ENCODE measurements at regions of chr4 and their contacts with region 1.

Region 1: DNA sequence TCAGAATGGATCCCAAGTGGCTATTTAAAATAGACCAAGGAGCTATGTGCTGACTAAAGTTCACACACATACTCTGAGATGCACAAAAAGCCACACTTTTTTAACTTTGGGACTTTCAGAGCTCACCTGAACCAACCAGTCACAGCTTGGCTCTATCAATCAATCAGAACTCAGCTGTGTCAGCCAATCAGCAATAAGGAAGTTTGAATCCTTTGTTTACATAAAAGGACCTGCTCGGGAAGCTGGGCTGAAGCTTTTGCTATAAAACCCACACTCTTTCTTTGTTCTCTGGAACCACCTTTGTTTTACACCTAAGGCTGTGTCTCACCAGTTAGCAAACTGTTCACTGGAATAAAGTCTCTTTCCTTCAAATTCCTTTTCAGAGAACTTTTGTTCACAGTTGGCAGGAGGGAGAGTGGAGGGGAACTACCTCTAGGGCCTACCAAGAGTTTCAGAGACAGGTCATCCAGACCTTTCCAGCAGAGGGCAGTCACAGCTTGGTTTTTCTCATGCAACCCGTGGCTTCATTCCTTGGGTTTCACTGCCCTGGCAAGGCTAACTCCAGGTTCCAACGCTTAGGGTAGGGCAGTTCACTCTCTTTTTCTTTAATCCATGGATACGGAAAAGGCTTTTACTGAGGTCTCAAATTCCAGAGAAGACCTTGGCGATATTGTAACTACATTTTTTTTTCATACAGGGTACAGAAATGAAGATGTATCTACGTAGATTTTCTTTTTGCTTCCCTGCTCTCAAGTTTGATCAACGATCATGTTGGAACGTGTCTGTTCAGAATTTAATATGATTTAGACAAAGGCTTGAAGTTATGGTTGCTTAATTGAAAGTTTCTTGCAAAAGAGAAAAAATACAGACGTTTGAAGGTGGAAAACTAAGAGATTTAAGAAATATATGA is 80.7 kb downstream of the GPRIN3 start:
- DNase-seq: peak; percentile 4
- ATAC-seq: peak; percentile 92
- H3K4me3 ChIP-seq: no peak overlapping the region
- H3K27ac ChIP-seq: no peak overlapping the region
- H3K4me1 ChIP-seq: no peaks in the 10 kb centered on the region
- H3K27me3 ChIP-seq: no peaks in the 10 kb centered on the region; a peak in 1 of 4 replicates
- CTCF ChIP-seq: peak; percentile 69 to 77 (median 71)
- EP300 ChIP-seq: no peak
- POLR2A ChIP-seq: no peak
- RAD21 ChIP-seq: peak; percentile 68

Region 2: DNA sequence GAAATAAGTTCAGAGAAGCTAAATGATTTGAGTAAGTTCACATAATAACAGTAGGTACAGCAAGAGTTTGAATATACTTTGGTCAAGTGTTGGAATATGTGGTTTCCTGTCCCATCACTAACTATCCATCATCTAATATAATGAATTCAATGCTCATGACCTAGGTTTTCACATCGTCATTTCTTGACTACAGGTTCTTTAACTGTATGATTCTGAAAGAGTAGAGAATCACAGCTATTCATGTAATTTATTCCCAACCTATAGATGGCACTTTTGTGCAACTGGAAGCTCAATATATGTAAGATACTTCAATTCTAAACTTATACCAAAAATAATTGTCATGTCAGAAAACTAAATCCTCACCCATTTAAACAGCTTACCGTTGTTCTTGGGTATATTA is 62.5 kb before region 1 on chr4:
- CTCF ChIA-PET with region 1: interaction called, 28 read pairs
- POLR2A ChIA-PET with region 1: no interaction called
- RAD21 ChIA-PET with region 1: interaction called, 10 read pairs
- SMC1A ChIA-PET with region 1: interaction called, 20 read pairs
- in situ Hi-C with region 1: no loop called
- intact Hi-C with region 1: no loop called
- DNase-seq: no peak
- ATAC-seq: peak; percentile 63
- H3K4me3 ChIP-seq: no peak overlapping the region
- H3K27ac ChIP-seq: no peak overlapping the region
- H3K4me1 ChIP-seq: no peaks in the 10 kb centered on the region
- H3K27me3 ChIP-seq: no peaks in the 10 kb centered on the region; a peak in 1 of 4 replicates
- CTCF ChIP-seq: no peak; a peak in 1 of 6 replicates
- EP300 ChIP-seq: no peak
- POLR2A ChIP-seq: no peak
- RAD21 ChIP-seq: no peak

Region 3: DNA sequence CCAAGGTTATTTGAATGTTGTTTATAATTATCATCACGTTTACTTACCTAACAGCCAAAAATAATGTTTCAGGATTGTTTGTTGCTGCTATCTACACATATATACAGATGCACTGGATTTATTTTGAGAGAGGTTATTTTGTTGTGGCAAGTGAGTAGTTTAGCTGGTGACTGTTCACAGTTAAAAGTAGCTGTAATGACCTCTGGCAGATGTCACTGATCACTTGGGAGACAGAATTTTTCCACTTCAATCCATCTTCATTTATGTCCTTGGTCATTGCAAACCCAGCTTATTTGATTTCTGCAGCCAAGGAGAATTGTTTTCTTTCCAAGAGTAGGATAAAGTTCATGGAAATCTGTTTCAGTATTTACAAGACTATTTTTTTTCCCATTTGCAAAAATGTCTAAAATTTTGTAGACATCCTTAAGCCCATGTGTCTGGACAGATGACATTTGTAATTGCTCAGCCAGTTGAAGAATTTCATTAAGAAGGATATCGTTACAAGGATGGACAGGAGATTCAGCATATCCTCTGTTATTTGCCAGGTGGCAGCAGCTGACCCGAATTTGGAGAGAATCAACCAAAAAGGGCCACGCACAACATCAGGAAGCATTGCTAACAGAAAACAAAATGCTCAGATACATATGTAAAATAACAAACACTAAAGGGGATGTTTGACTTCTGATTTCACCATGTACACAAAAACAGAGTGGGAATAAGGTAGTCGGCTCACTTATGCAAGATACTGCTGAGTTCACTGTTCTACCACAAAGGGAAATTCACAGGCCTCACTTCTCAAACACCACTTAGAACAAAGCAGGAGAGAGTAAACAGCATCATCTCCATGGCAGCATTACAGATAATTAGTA is 16.2 kb after region 1 on chr4:
- CTCF ChIA-PET with region 1: interaction called, 24 read pairs
- POLR2A ChIA-PET with region 1: no interaction called
- RAD21 ChIA-PET with region 1: no interaction called
- SMC1A ChIA-PET with region 1: interaction called, 12 read pairs
- in situ Hi-C with region 1: no loop called
- intact Hi-C with region 1: no loop called
- DNase-seq: no peak
- ATAC-seq: no peak; the same call in 1 of the 3 replicates
- H3K4me3 ChIP-seq: no peak overlapping the region
- H3K27ac ChIP-seq: no peak overlapping the region
- H3K4me1 ChIP-seq: no peaks in the 10 kb centered on the region
- H3K27me3 ChIP-seq: no peaks in the 10 kb centered on the region
- CTCF ChIP-seq: no peak
- EP300 ChIP-seq: no peak
- POLR2A ChIP-seq: no peak
- RAD21 ChIP-seq: no peak

Region 4: DNA sequence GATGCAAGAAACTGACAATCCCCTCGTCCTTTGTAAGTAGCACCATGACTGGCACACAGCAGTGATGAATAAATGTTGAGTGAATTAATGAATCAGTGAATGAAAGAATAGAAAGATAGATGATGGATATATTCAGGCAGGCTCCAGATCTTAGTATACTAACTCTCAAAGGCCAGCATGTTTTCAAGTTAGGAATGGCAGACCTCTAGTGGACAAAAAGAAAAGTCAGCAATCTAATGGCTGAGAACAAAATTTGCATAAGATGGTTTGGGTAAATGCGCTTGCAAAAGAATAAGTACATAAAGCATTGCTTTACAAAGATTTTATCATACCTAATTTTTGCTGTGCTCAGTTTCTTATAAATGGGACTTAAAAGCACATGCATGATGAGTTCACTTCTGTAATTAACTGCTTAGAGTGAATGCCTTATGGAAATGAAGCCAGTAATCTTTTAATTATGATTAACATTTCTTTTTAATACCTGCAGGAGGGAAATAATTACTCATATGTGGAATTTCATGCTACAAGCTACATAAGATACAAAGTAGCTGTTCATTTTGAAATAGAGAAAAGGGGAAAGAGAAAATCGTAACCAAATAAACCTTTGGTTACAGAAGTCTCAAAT is 207.6 kb after region 1 on chr4:
- CTCF ChIA-PET with region 1: interaction called, 35 read pairs
- POLR2A ChIA-PET with region 1: no interaction called
- RAD21 ChIA-PET with region 1: interaction called, 17 read pairs
- SMC1A ChIA-PET with region 1: interaction called, 33 read pairs
- in situ Hi-C with region 1: no loop called
- intact Hi-C with region 1: loop called (anchors 1 kb)
- DNase-seq: no peak
- ATAC-seq: peak; percentile 71
- H3K4me3 ChIP-seq: no peak overlapping the region
- H3K27ac ChIP-seq: no peak overlapping the region
- H3K4me1 ChIP-seq: no peaks in the 10 kb centered on the region
- H3K27me3 ChIP-seq: no peaks in the 10 kb centered on the region; a peak in 1 of 4 replicates
- CTCF ChIP-seq: peak; percentile 62 to 70 (median 67)
- EP300 ChIP-seq: no peak
- POLR2A ChIP-seq: no peak
- RAD21 ChIP-seq: peak; percentile 77